ENCODE measurements at regions of chr2 and their contacts with region 1.

Region 1: GRCh38 chr2:187499941-187500532 is 52.0 kb upstream of the CALCRL start:
- DNase-seq: peak in 1 of 2 experiments; percentile 71
- H3K4me3 ChIP-seq: no peak overlapping the region
- H3K27ac ChIP-seq: no peak overlapping the region
- H3K4me1 ChIP-seq: peaks cover 0 to 6% (median 0%) of the 10 kb centered on the region in 4 experiments; a peak in 1 of 7 replicates
- H3K27me3 ChIP-seq: no peaks in the 10 kb centered on the region
- CTCF ChIP-seq: peak in 2 of 3 experiments; percentile 62 to 90; a peak in 3 of 4 replicates
- EP300 ChIP-seq: no peak
- POLR2A ChIP-seq: no peak
- RAD21 ChIP-seq: peak; percentile 98 to 99

Region 2: GRCh38 chr2:187519419-187520120 is 19.5 kb after region 1 on chr2:
- CTCF ChIA-PET with region 1: interaction called, 18 read pairs
- POLR2A ChIA-PET with region 1: no interaction called
- DNase-seq: peak; percentile 25 to 66
- H3K4me3 ChIP-seq: no peak overlapping the region; a peak in 1 of 8 replicates
- H3K27ac ChIP-seq: peak overlapping the region; percentile 90; the same call in 1 of the 2 replicates
- H3K4me1 ChIP-seq: peaks cover 0 to 4% (median 3%) of the 10 kb centered on the region in 4 experiments; a peak in 3 of 7 replicates
- H3K27me3 ChIP-seq: no peaks in the 10 kb centered on the region
- CTCF ChIP-seq: no peak
- EP300 ChIP-seq: peak in 1 of 2 experiments; percentile 70; a peak in 1 of 3 replicates
- POLR2A ChIP-seq: no peak
- RAD21 ChIP-seq: no peak

Region 3: GRCh38 chr2:187532348-187533120 is 32.5 kb after region 1 on chr2:
- CTCF ChIA-PET with region 1: interaction called, 11 read pairs
- POLR2A ChIA-PET with region 1: no interaction called
- DNase-seq: no peak
- H3K4me3 ChIP-seq: no peak overlapping the region
- H3K27ac ChIP-seq: no peak overlapping the region
- H3K4me1 ChIP-seq: 0 out of 7 replicates have a peak, but pooled peaks cover 0 to 5% (median 0%) of the 10 kb centered on the region in 4 experiments
- H3K27me3 ChIP-seq: no peaks in the 10 kb centered on the region
- CTCF ChIP-seq: no peak
- EP300 ChIP-seq: no peak
- POLR2A ChIP-seq: no peak
- RAD21 ChIP-seq: no peak

Region 4: DNA sequence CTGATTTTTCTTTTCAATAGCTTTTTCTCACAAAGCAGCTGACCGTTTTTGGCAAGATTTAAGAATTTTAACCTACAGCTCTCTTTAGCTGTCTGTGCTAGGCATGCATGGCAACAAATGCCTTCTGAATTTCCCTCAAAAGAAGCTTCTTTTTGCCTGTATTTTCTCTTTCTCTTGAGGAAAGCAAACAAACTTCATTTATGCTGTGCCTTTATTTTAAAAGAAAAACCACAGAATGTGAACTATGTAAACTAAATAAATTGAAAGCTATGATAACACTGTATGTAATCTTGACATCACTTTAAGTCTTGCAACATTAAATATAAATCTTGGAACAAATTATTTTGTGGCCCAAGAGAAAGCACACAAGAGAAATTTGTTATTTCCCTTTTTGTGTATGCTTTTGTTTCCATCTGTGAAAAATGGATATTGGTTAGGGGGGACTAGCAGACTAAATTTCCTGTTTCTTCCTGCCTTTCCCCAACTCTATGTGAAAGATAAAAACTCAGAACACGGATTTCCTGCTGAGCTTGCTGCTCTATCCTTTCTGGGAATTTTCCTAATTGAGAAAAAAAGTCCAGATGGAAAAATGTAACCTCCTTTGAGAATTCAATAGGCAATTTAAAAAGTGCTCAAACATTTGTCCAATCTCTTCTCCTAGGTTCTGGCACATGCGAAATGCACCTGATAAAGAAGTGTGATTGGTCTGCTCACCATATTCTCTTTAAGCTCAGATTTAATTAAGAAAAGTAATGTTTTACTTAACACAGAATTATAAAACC is 75.1 kb after region 1 on chr2:
- CTCF ChIA-PET with region 1: interaction called, 331 read pairs
- POLR2A ChIA-PET with region 1: no interaction called
- DNase-seq: no peak
- H3K4me3 ChIP-seq: no peak overlapping the region
- H3K27ac ChIP-seq: no peak overlapping the region
- H3K4me1 ChIP-seq: no peaks in the 10 kb centered on the region; a peak in 2 of 7 replicates
- H3K27me3 ChIP-seq: no peaks in the 10 kb centered on the region
- CTCF ChIP-seq: no peak
- EP300 ChIP-seq: no peak
- POLR2A ChIP-seq: no peak
- RAD21 ChIP-seq: no peak

Region 5: DNA sequence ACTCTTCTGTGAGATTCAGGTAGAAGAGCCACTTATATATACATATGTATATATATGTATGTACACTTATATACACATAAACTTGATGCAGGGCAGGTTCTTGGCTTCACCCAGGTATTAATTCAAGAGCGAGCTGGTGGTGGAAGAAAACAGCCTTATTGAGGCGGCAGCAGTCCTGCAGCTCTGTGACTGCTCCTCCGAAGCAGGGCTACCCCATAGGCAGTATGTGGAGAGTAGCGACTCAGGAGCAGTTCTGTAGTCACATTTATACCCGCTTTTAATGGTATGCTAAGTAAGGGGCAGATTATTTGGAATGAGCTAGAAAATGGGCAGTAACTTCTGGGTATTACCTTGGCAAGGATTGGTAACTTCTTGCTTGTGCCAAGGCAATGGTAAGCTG is 334.8 kb after region 1 on chr2:
- CTCF ChIA-PET with region 1: interaction called, 10 read pairs
- POLR2A ChIA-PET with region 1: no interaction called
- DNase-seq: no peak
- H3K4me3 ChIP-seq: no peak overlapping the region
- H3K27ac ChIP-seq: no peak overlapping the region
- H3K4me1 ChIP-seq: no peaks in the 10 kb centered on the region
- H3K27me3 ChIP-seq: no peaks in the 10 kb centered on the region
- CTCF ChIP-seq: no peak
- EP300 ChIP-seq: no peak
- POLR2A ChIP-seq: no peak
- RAD21 ChIP-seq: no peak

Measured in H1 (cell line).